ENCODE measurements at regions of chr20 and their contacts with region 1.

Region 1: GRCh38 chr20:63864847-63865640 is at the start of gene TPD52L2:
- DNase-seq: peak; percentile 98 to 99
- ATAC-seq: peak; percentile 90 to 94
- H3K4me3 ChIP-seq: peak within 1 kb of the TSS; percentile 95
- H3K27ac ChIP-seq: peak within 1 kb of the TSS; percentile 94 to 95
- H3K4me1 ChIP-seq: peaks cover 14% of the 10 kb centered on the region; the same call in 2 of the 3 replicates
- CTCF ChIP-seq: no peak
- EP300 ChIP-seq: no peak
- POLR2A ChIP-seq: peak; percentile 68
- RAD21 ChIP-seq: no peak
- polyA plus RNA-seq, gene TPD52L2: 86.3 and 93.9 TPM in 2 replicates

Region 2: DNA sequence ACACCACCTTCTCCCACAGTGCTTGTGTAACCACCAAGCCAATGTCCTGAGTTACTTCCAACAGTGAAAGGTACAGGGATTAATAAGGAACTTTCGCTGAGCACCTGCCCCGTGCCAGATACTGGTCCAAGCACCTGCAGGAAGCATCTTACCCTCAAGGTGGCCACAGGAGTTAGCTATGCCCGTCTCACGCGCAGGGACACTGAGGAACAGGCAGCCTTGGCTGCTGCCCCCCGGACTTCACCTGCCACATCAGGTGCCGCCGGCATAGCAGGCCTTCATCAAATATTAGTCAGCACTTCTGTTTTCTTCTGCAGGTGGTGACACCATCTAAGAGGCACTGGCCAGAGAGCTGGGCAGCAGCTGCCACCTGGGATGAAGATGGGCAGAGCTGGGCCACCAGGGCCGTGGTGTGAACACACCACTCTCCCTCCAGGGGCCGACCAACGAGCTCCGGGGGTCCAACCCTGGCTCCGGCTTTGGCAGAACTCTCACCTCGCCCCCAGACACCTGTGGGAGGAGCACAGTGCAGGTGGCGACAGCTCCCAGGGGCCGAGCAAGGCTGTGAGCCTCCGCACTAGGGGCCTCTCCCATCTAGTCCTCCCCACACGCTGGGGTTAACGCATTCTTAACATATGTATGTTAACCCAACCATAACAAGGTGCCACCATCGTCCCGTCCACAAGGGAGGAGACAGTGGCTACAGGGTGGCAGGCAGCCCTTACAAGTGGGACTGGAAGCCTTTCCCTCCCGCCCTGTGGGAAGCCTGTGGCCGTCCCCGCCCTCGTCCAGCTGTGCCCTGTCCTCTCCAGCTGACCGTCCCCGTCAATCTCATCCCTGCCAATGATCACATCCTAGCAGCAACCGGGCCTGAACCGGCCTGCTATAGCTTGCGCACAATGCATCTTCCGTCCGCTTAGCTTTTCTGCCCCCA is 347.4 kb before region 1 on chr20:
- CTCF ChIA-PET with region 1: no interaction called
- POLR2A ChIA-PET with region 1: no interaction called
- DNase-seq: no peak
- ATAC-seq: no peak
- H3K4me3 ChIP-seq: no peak overlapping the region
- H3K27ac ChIP-seq: no peak overlapping the region
- H3K4me1 ChIP-seq: peaks cover 10% of the 10 kb centered on the region; the same call in 2 of the 3 replicates
- CTCF ChIP-seq: no peak
- EP300 ChIP-seq: no peak
- POLR2A ChIP-seq: no peak
- RAD21 ChIP-seq: no peak

Region 3: GRCh38 chr20:63707549-63708300 is 157.3 kb before region 1 on chr20 and contains the starts of genes ARFRP1 and ZGPAT:
- CTCF ChIA-PET with region 1: no interaction called
- POLR2A ChIA-PET with region 1: interaction called, 11 read pairs
- DNase-seq: peak; percentile 64 to 87
- ATAC-seq: peak; percentile 88 to 91
- H3K4me3 ChIP-seq: peak within 1 kb of the TSS; percentile 98
- H3K27ac ChIP-seq: peak within 1 kb of the TSS; percentile 97 to 98
- H3K4me1 ChIP-seq: peaks cover 21% of the 10 kb centered on the region
- CTCF ChIP-seq: no peak
- EP300 ChIP-seq: no peak
- POLR2A ChIP-seq: peak; percentile 40
- RAD21 ChIP-seq: no peak
- polyA plus RNA-seq, gene ARFRP1: 14.1 and 25.1 TPM in 2 replicates
- polyA plus RNA-seq, gene ZGPAT: 9.2 and 9.5 TPM in 2 replicates

Region 4: GRCh38 chr20:63718996-63719395 is 146.0 kb before region 1 on chr20:
- CTCF ChIA-PET with region 1: no interaction called
- POLR2A ChIA-PET with region 1: no interaction called
- DNase-seq: no peak
- ATAC-seq: no peak
- H3K4me3 ChIP-seq: no peak overlapping the region
- H3K27ac ChIP-seq: no peak overlapping the region
- H3K4me1 ChIP-seq: no peaks in the 10 kb centered on the region
- CTCF ChIP-seq: no peak
- EP300 ChIP-seq: no peak
- POLR2A ChIP-seq: no peak
- RAD21 ChIP-seq: no peak

Region 5: GRCh38 chr20:63740627-63741354 is 124.3 kb before region 1 on chr20:
- CTCF ChIA-PET with region 1: interaction called, 7 read pairs
- POLR2A ChIA-PET with region 1: interaction called, 14 read pairs
- DNase-seq: peak; percentile 90 to 94
- ATAC-seq: peak; percentile 58 to 85
- H3K4me3 ChIP-seq: peak overlapping the region; percentile 97
- H3K27ac ChIP-seq: peak overlapping the region; percentile 93 to 96
- H3K4me1 ChIP-seq: peaks cover 17% of the 10 kb centered on the region
- CTCF ChIP-seq: no peak
- EP300 ChIP-seq: no peak
- POLR2A ChIP-seq: peak; percentile 13; the same call in 1 of the 2 replicates
- RAD21 ChIP-seq: no peak

Region 6: DNA sequence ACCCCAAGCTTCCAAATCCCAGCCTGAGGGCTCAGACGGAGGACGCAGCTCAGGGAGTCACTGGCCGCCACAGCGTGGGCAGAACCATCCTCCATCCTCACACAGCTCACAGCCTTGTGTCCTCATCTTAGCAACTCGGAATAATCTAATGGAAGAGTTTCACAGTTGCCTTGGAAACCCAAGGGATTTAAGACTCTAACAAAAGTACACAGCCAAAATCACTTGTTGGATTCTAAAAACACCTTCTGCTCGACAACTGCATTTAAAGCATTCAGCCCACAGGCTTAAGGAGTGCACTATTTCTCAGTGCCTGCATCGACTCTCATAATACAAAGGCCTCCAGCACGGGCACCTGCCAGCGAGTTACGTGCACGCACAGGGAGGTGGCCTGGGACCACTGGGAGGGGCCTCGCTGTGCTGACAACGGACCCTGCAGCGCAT is 79.3 kb before region 1 on chr20:
- CTCF ChIA-PET with region 1: interaction called, 10 read pairs
- POLR2A ChIA-PET with region 1: no interaction called
- DNase-seq: no peak
- ATAC-seq: peak; percentile 19 to 25; a peak in 3 of 6 replicates
- H3K4me3 ChIP-seq: no peak overlapping the region
- H3K27ac ChIP-seq: no peak overlapping the region
- H3K4me1 ChIP-seq: no peaks in the 10 kb centered on the region
- CTCF ChIP-seq: no peak
- EP300 ChIP-seq: no peak
- POLR2A ChIP-seq: no peak
- RAD21 ChIP-seq: no peak

Region 7: GRCh38 chr20:63854069-63854765 is 10.8 kb before region 1 on chr20:
- CTCF ChIA-PET with region 1: interaction called, 12 read pairs
- POLR2A ChIA-PET with region 1: interaction called, 13 read pairs
- DNase-seq: no peak
- ATAC-seq: peak in 1 of 2 experiments; percentile 9; a peak in 2 of 6 replicates
- H3K4me3 ChIP-seq: no peak overlapping the region
- H3K27ac ChIP-seq: peak overlapping the region in 1 of 2 experiments; percentile 42; a peak in 2 of 6 replicates
- H3K4me1 ChIP-seq: peaks cover 13% of the 10 kb centered on the region; the same call in 1 of the 3 replicates
- CTCF ChIP-seq: no peak
- EP300 ChIP-seq: no peak
- POLR2A ChIP-seq: no peak
- RAD21 ChIP-seq: no peak

Region 8: GRCh38 chr20:63889241-63890200 is 24.5 kb after region 1 on chr20:
- CTCF ChIA-PET with region 1: interaction called, 11 read pairs
- POLR2A ChIA-PET with region 1: interaction called, 14 read pairs
- DNase-seq: no peak
- ATAC-seq: no peak
- H3K4me3 ChIP-seq: no peak overlapping the region
- H3K27ac ChIP-seq: no peak overlapping the region
- H3K4me1 ChIP-seq: no peaks in the 10 kb centered on the region
- CTCF ChIP-seq: no peak
- EP300 ChIP-seq: no peak
- POLR2A ChIP-seq: no peak
- RAD21 ChIP-seq: no peak

Region 9: DNA sequence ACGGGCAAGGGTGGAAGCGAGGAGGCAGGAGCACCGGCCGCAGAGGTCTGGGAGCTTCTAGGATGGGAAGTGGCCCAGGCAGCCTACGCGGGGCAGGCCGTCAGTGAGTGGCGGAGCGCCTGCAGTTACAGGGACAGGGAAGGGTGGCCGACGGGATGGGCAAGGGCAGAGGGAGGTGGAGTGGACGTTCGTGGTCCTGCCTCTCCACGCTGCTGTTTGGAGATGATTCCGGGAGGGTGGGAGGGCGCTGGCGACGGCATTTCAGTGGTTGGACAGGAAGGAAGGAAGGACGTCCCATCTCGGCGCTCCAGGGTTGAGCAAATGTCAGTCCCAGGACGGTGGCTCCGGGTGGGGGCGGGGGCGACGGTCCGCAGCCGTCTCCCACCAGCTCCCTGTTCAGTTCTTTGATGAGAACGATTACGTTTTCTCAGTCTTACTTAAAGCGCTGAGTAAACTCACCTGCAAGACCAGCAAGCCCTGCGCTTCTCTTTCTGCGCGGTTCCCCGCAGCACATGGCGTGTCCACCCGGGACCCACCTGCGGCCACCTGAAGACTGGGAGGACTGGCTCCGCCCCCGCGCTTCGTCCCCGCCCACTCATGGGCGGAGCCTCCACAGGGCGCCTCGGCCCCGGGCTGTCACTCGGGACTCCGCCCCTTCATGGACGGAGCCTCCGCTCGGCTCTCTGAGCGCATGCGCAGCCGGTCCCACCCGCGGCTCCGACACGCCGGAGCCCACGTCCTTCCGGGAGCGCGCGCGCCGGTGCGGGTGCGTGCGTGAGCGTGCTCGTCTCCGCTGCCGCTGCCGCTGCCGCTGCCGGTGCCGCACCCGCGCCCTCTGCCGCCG is 29.5 kb after region 1 on chr20 and contains the start of gene DNAJC5:
- CTCF ChIA-PET with region 1: interaction called, 11 read pairs
- POLR2A ChIA-PET with region 1: interaction called, 14 read pairs
- DNase-seq: peak; percentile 92 to 99
- ATAC-seq: peak; percentile 79 to 88
- H3K4me3 ChIP-seq: peak within 1 kb of the TSS; percentile 65
- H3K27ac ChIP-seq: peak within 1 kb of the TSS; percentile 82 to 96
- H3K4me1 ChIP-seq: peaks cover 12% of the 10 kb centered on the region
- CTCF ChIP-seq: no peak
- EP300 ChIP-seq: no peak
- POLR2A ChIP-seq: peak; percentile 53
- RAD21 ChIP-seq: no peak
- polyA plus RNA-seq, gene DNAJC5: 20.3 and 20.4 TPM in 2 replicates

Region 10: GRCh38 chr20:64269604-64270411 is 404.8 kb after region 1 on chr20:
- CTCF ChIA-PET with region 1: no interaction called
- POLR2A ChIA-PET with region 1: no interaction called
- DNase-seq: no peak
- ATAC-seq: no peak; a peak in 1 of 6 replicates
- H3K4me3 ChIP-seq: no peak overlapping the region
- H3K27ac ChIP-seq: no peak overlapping the region
- H3K4me1 ChIP-seq: no peaks in the 10 kb centered on the region
- CTCF ChIP-seq: no peak
- EP300 ChIP-seq: no peak
- POLR2A ChIP-seq: no peak
- RAD21 ChIP-seq: no peak

Measured in A549 (cell line).